CD4-positive, alpha-beta memory T cell (primary cell): ENCODE measurements at regions of chr11 and their contacts with region 1.

Region 1: DNA sequence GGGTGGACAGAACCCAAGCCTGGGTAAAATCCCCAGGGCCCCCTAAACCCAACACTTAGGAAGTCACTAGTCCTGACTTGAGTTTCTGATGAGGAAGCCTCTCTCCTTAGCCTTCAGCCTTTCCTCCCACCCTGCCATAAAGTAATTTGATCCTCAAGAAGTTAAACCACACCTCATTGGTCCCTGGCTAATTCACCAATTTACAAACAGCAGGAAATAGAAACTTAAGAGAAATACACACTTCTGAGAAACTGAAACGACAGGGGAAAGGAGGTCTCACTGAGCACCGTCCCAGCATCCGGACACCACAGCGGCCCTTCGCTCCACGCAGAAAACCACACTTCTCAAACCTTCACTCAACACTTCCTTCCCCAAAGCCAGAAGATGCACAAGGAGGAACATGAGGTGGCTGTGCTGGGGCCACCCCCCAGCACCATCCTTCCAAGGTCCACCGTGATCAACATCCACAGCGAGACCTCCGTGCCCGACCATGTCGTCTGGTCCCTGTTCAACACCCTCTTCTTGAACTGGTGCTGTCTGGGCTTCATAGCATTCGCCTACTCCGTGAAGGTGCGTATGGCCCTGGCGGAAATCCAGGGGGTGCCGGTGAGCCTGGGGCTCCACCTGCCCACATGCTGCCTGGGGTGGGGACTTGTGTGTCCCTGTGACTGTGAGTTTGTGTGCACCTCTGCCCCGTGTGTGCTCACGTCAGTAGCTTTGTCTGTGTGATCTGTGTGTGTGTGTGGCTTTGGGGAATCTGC is at the start of gene IFITM1:
- DNase-seq: peak; percentile 72 to 85 (median 79)
- H3K4me3 ChIP-seq: peak within 1 kb of the TSS; percentile 59 to 91
- H3K4me3 Mint-ChIP-seq: peak within 1 kb of the TSS; percentile 92 to 99 (median 98)
- H3K27ac ChIP-seq: peak within 1 kb of the TSS; percentile 76
- H3K27ac Mint-ChIP-seq: peak within 1 kb of the TSS; percentile 94 to 100 (median 98)
- H3K4me1 ChIP-seq: peaks cover 37% of the 10 kb centered on the region
- H3K4me1 Mint-ChIP-seq: peaks cover 29 to 56% (median 35%) of the 10 kb centered on the region in 4 donors
- H3K27me3 ChIP-seq: no peaks in the 10 kb centered on the region
- H3K27me3 Mint-ChIP-seq: no peaks in the 10 kb centered on the region
- total RNA-seq, gene IFITM1: 119 to 121 TPM

Region 2: GRCh38 chr11:288328-289144 is 25.4 kb before region 1 on chr11 and contains the start of gene PGGHG:
- CTCF ChIA-PET with region 1: interaction called, 3 read pairs
- POLR2A ChIA-PET with region 1: interaction called, 55 read pairs
- intact Hi-C with region 1: loop called (anchors 2 kb)
- DNase-seq: peak in 3 of 5 donors; percentile 49 to 60 (median 51)
- H3K4me3 ChIP-seq: peak within 1 kb of the TSS; percentile 83 to 95
- H3K4me3 Mint-ChIP-seq: peak within 1 kb of the TSS; percentile 88 to 99 (median 98)
- H3K27ac ChIP-seq: peak within 1 kb of the TSS; percentile 96
- H3K27ac Mint-ChIP-seq: peak within 1 kb of the TSS; percentile 95 to 100 (median 98)
- H3K4me1 ChIP-seq: peaks cover 38% of the 10 kb centered on the region
- H3K4me1 Mint-ChIP-seq: peaks cover 14 to 51% (median 31%) of the 10 kb centered on the region in 4 donors
- H3K27me3 ChIP-seq: no peaks in the 10 kb centered on the region
- H3K27me3 Mint-ChIP-seq: no peaks in the 10 kb centered on the region
- total RNA-seq, gene PGGHG: 304 TPM

Region 3: DNA sequence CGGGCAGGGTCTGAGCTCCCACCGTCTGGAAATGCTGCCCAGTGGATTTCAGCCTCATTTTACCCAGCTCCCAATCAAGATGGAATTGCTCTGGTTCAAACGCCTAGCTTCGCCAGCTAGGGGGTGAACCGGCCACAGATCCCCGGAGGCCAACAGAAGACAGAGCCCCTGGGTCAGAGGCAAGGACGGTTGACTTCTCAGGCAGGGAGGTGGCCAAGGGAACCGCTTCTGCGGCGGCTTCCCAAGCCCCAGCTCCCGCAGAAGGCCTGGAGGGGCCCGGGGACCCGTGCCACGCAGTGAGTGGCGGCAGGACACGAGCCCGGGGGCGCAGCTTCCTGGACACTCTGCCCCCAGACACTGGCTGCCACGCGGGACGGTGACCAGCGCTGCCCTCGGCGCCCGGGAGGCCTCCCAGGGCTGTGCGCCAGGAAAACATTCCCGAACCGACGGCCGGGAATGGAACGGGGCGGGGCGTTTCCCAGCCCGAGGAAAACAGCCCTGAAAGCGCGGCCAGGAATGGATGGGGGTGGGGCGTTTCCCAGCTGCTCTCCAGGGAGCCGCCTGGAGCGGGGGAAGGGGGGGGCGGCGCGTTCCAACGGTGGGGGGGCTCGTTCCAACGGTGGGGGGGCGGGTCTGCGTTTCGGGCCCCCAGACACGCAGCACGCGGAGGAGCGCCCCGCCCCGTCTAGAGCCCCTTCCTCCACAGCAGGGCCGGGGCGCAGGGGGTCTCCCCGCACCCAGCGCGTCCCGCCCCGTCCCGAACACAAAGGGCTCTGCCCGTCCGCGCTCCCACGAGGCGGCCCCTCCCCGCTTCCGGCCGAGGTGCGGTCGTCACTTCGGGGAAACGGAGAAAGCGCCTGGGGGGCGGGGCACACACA is 41.9 kb after region 1 on chr11:
- CTCF ChIA-PET with region 1: interaction called, 34 read pairs
- POLR2A ChIA-PET with region 1: interaction called, 55 read pairs
- intact Hi-C with region 1: loop called (anchors 1 kb)
- DNase-seq: peak; percentile 85 to 90 (median 86)
- H3K4me3 ChIP-seq: peak overlapping the region in 1 of 2 donors; percentile 59
- H3K4me3 Mint-ChIP-seq: peak overlapping the region; percentile 77 to 91 (median 84)
- H3K27ac ChIP-seq: peak overlapping the region; percentile 89
- H3K27ac Mint-ChIP-seq: peak overlapping the region in 6 of 7 donors; percentile 96 to 99 (median 97)
- H3K4me1 ChIP-seq: peaks cover 20% of the 10 kb centered on the region
- H3K4me1 Mint-ChIP-seq: peaks cover 7 to 50% (median 29%) of the 10 kb centered on the region in 4 donors
- H3K27me3 ChIP-seq: no peaks in the 10 kb centered on the region
- H3K27me3 Mint-ChIP-seq: no peaks in the 10 kb centered on the region

Region 4: DNA sequence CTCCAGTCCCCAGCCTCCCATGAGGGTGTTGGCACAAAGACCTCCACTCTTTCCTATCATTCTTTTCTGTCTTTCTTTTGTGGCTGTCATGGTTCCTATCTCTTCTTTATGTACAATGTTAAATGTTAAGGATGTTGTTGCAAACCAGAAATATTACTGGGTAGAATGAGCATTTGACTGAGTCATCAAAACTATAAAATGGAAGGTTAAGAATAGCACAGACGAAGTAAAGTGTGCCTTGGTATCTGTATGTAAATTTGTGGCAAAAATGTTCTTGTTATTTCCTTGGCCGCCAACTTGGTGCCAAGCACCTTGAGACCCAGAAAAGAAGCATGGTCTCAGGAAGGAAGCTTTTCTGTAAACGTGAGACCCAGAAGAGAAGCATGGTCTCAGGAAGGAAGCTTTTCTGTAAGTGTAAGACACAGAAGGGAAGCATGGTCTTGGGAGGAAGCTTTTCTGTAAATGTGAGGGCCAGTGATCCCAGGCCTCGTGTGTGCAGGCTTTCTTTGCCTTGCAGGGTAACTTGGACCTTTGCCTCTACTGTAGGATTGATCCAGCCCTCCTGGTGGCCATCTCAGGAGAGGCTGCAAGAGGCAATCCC is 73.3 kb after region 1 on chr11:
- CTCF ChIA-PET with region 1: no interaction called
- POLR2A ChIA-PET with region 1: no interaction called
- intact Hi-C with region 1: no loop called
- DNase-seq: no peak
- H3K4me3 ChIP-seq: no peak overlapping the region
- H3K4me3 Mint-ChIP-seq: no peak overlapping the region
- H3K27ac ChIP-seq: no peak overlapping the region
- H3K27ac Mint-ChIP-seq: peak overlapping the region in 6 of 7 donors; percentile 3 to 72 (median 37)
- H3K4me1 ChIP-seq: no peaks in the 10 kb centered on the region
- H3K4me1 Mint-ChIP-seq: peaks cover 0 to 15% (median 4%) of the 10 kb centered on the region in 4 donors
- H3K27me3 ChIP-seq: no peaks in the 10 kb centered on the region
- H3K27me3 Mint-ChIP-seq: peaks cover 0 to 5% of the 10 kb centered on the region in 2 donors

Region 5: DNA sequence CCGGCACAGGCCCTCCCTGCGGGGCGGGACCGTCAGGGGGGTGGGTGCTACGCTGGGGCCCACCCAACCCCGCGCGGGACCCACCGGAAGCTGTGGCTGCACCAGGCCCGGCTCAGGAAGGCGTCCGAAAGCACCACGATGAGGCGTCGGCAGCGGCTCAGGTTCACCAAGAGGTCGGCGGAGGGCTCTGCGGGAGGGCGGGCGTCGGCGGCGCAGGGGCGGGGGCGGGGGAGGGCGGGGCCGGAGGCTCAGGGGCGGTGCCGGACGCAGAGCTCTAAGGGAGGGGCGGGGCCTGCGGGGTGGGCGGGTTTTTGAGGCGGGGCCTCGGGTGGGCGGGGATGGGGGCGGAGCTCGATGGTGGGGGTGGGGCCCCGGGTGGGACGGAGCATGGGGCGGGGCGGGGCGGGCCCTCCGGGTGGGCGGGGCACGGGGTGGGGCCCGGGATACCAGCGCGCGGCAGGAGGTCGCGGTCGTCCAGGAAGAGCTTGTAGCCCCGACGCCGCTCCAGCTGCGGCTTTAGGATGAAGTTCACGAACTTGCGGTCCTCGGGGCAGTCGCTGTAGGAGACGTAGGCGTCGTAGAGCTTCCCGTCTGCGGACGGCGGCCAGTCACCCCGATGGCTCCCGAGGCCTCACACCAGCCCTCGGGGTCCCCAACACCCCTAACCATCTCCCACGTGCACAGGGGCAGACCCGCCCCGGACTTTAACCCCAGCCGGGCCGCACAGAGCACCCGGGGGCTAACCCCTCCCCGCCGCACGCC is 93.2 kb after region 1 on chr11:
- CTCF ChIA-PET with region 1: no interaction called
- POLR2A ChIA-PET with region 1: interaction called, 16 read pairs
- intact Hi-C with region 1: loop called (anchors 2 kb)
- DNase-seq: peak; percentile 93 to 97 (median 95)
- H3K4me3 ChIP-seq: peak overlapping the region in 1 of 2 donors; percentile 28
- H3K4me3 Mint-ChIP-seq: peak overlapping the region in 5 of 8 donors; percentile 28 to 62 (median 41)
- H3K27ac ChIP-seq: peak overlapping the region; percentile 59
- H3K27ac Mint-ChIP-seq: peak overlapping the region; percentile 22 to 92 (median 72)
- H3K4me1 ChIP-seq: peaks cover 21% of the 10 kb centered on the region
- H3K4me1 Mint-ChIP-seq: peaks cover 0 to 18% (median 9%) of the 10 kb centered on the region in 4 donors
- H3K27me3 ChIP-seq: no peaks in the 10 kb centered on the region
- H3K27me3 Mint-ChIP-seq: no peaks in the 10 kb centered on the region